AG04450 (cell line): ENCODE measurements at regions of chr2 and their contacts with region 1.

Region 1: GRCh38 chr2:174465327-174465726 is 21.5 kb downstream of the GPR155 start:
- DNase-seq: no peak
- H3K4me3 ChIP-seq: no peak overlapping the region
- H3K27ac ChIP-seq: no peak overlapping the region
- H3K27me3 ChIP-seq: no peaks in the 10 kb centered on the region
- CTCF ChIP-seq: peak; percentile 11; the same call in 1 of the 2 replicates

Region 2: DNA sequence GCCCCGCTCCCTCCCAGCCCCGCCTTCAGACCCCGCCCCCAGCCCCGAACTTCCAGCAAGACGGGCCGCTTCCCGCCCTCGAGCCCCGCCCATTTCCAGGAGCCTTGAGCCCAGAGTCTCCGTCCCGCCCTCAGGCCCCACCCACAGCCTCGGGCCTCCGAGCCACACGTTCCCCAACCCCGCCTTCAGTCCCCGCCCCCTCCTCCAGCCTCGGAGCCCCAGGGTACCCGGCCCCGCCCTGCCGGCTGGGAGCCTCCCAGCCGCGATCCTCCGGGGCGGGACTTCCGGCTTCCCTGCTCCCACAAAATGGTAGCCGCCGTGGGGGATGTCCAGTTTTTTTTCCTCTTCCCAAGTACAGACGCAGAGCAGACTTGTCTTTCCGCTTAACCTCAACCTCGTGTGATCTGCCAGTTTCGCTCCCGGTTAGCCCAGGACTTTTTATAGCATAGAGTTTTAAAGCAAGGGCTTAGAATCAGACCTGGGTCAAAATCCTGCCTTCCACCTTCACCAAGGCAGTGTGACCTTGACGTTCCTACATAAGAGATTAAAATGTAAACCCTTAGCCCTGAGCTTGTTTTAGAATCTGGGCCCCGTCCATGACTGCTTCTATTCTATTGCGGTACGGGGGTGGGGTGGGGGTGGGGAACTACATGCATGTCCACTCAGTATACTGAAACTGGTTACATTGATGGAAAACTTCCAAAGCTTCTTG is 21.9 kb after region 1 on chr2:
- CTCF ChIA-PET with region 1: interaction called, 64 read pairs
- POLR2A ChIA-PET with region 1: no interaction called
- DNase-seq: peak; percentile 96
- H3K4me3 ChIP-seq: peak overlapping the region; percentile 90
- H3K27ac ChIP-seq: no peak overlapping the region
- H3K27me3 ChIP-seq: peaks cover 4% of the 10 kb centered on the region
- CTCF ChIP-seq: no peak

Region 3: GRCh38 chr2:174546581-174547506 is 81.5 kb after region 1 on chr2:
- CTCF ChIA-PET with region 1: interaction called, 137 read pairs
- POLR2A ChIA-PET with region 1: no interaction called
- DNase-seq: no peak
- H3K4me3 ChIP-seq: no peak overlapping the region
- H3K27ac ChIP-seq: no peak overlapping the region
- H3K27me3 ChIP-seq: peaks cover 13% of the 10 kb centered on the region
- CTCF ChIP-seq: peak; percentile 57

Region 4: DNA sequence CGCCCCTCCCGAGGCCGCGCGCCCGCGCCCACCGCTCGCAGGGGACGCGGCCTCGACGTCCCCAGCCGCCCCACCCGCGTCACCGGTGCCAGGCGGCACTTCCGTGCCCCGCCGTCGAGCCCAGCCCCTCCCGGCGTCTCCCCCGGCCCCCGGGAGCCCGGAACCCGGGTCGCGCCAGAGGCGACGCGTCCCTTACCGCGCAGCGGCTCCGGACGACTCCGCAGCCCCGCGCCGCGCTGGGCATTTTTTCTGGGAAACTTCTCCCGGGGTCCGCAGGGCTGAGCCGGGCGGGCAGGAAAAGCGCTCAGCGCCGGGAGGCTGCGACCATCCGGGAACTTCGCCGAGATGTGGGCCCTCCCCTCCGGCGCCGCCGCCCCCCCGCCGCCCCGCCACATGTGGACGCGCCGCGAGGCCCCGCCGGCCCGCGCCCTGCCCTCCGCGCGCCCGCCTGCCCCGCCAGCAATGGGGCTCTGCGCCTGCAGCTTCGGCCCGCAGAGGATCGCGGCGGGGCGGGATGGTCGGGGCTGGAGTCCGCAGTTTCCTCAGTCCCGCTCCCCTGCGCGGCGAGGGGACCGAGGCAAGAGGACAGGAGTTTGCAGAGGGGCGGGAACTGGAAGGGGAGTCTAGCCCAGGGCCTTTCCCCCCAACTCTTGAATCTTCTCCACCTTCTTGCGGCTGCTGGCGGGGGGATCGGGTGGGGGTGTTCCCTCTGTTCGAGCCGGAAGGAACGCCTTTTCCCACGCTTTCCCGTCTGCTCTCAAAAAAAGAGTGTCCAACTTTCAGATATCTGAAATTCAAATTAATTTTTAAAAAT is 217.5 kb after region 1 on chr2:
- CTCF ChIA-PET with region 1: interaction called, 142 read pairs
- POLR2A ChIA-PET with region 1: no interaction called
- DNase-seq: no peak
- H3K4me3 ChIP-seq: peak overlapping the region; percentile 83
- H3K27ac ChIP-seq: no peak overlapping the region
- H3K27me3 ChIP-seq: peaks cover 3% of the 10 kb centered on the region
- CTCF ChIP-seq: no peak